HEK293 (cell line): ENCODE measurements at regions of chr5 and their contacts with region 1.

Region 1: DNA sequence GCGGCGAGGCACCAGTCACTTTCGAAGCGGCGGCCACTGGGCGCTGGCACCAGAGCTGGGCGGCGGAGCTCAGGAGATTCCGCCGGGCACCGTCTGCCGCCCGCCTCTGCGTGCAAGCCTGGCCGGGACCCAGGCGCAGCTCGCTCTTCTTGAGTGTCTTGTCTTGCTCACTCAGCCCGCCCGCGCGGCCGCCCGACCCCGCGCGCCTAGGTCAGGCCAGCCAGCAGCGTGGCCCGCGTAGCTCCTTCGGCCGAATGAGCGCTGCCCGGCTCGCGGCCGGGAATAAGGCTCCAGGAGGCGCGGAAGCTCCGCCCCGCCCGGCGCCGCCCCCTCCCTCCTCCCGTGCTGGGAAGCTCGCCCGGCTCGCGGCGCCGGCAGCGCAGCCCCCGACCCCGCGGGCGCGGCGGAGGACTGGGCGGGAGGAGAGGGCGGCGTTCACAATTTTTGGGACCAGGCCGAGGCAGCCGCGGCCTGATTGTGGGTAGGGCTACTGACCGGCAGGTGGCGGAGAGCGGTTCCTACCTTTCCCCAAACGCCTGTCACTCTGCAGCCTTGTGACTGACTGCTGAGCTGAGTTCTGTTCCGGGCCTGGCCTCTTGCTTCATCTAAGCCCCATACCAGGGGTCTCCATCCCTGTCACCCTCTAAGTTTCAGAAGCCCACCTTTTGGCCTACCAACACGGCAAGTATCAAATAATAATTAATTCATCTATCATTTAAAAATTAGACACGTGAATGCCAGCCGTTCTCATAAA is at the start of gene HBEGF:
- H3K4me3 ChIP-seq: peak within 1 kb of the TSS; percentile 68
- H3K27ac ChIP-seq: peak within 1 kb of the TSS; percentile 53; the same call in 1 of the 2 replicates
- H3K4me1 ChIP-seq: no peaks in the 10 kb centered on the region
- CTCF ChIP-seq: peak; percentile 4; the same call in 1 of the 2 replicates

Region 2: GRCh38 chr5:140244525-140245025 is 102.0 kb before region 1 on chr5:
- CTCF ChIA-PET with region 1: interaction called, 660 read pairs
- POLR2A ChIA-PET with region 1: interaction called, 130 read pairs
- H3K4me3 ChIP-seq: no peak overlapping the region
- H3K27ac ChIP-seq: no peak overlapping the region
- H3K4me1 ChIP-seq: peaks cover 20% of the 10 kb centered on the region
- CTCF ChIP-seq: peak; percentile 95

Region 3: DNA sequence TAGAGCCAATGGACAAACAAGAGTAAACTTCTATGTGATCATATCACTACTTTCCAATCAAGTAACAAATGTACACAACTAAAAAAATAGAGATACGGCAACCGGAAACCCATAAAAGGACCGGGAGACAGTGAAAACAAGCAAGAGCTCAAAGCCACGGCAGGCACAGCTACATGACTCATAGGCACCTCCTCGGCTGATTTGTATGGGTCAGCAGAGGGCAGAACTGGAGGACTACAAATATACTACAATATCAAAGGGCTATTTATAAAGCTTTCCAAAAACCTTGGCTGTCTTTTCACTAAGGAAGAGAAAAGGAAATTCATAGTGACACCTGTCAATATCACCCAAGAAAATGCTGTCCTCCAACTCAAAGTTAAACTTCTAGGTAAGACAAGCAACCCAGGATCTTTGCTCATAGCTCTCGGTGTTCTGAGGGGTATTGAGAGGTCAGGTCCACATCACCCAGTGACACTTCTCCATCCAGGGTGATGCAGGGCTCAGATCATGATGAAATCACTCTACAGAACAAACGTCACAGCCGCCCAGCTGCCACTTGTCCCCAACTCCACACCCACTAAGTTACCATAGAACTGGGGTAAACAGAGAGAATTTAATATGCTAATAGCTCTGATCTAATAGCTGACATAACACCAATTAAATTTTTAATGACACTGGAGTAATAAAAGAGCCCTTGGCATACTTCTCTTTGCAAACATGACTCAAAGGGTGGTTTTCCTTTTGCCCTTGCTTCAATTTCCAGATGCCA is 84.9 kb before region 1 on chr5:
- CTCF ChIA-PET with region 1: interaction called, 25 read pairs
- POLR2A ChIA-PET with region 1: interaction called, 17 read pairs
- H3K4me3 ChIP-seq: no peak overlapping the region
- H3K27ac ChIP-seq: no peak overlapping the region
- H3K4me1 ChIP-seq: peaks cover 11% of the 10 kb centered on the region
- CTCF ChIP-seq: no peak

Region 4: GRCh38 chr5:140295414-140295813 is 51.1 kb before region 1 on chr5:
- CTCF ChIA-PET with region 1: interaction called, 12 read pairs
- POLR2A ChIA-PET with region 1: interaction called, 22 read pairs
- H3K4me3 ChIP-seq: no peak overlapping the region
- H3K27ac ChIP-seq: no peak overlapping the region
- H3K4me1 ChIP-seq: peaks cover 47% of the 10 kb centered on the region
- CTCF ChIP-seq: no peak

Region 5: GRCh38 chr5:140327589-140327988 is 18.9 kb before region 1 on chr5:
- CTCF ChIA-PET with region 1: interaction called, 19 read pairs
- POLR2A ChIA-PET with region 1: interaction called, 37 read pairs
- H3K4me3 ChIP-seq: no peak overlapping the region
- H3K27ac ChIP-seq: no peak overlapping the region
- H3K4me1 ChIP-seq: peaks cover 10% of the 10 kb centered on the region
- CTCF ChIP-seq: no peak

Region 6: DNA sequence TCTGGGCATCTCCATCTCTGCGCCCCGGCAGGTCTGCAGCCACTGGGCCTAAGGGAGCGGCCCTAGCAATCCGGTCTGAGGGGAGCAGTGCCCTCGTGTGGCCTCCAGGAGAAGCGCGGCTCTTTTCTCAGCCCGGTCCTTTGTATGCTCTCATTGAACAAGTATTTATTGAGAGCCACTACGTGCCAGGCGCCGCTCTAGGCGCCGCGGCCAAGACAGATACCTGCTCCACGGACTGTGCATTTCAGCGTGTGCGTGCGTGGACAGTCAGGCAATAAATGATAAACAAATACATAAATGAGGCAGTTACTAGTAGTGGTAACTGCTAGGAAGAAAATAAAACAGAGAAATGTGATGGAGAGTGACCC is 11.2 kb after region 1 on chr5:
- CTCF ChIA-PET with region 1: interaction called, 88 read pairs
- POLR2A ChIA-PET with region 1: interaction called, 11 read pairs
- H3K4me3 ChIP-seq: no peak overlapping the region
- H3K27ac ChIP-seq: no peak overlapping the region
- H3K4me1 ChIP-seq: no peaks in the 10 kb centered on the region
- CTCF ChIP-seq: peak; percentile 89

Region 7: GRCh38 chr5:140718241-140718580 is 371.7 kb after region 1 on chr5:
- CTCF ChIA-PET with region 1: interaction called, 10 read pairs
- POLR2A ChIA-PET with region 1: interaction called, 14 read pairs
- H3K4me3 ChIP-seq: peak overlapping the region; percentile 45
- H3K27ac ChIP-seq: no peak overlapping the region; the same call in 1 of the 2 replicates
- H3K4me1 ChIP-seq: no peaks in the 10 kb centered on the region
- CTCF ChIP-seq: no peak